ENCODE measurements at regions of chr1 and their contacts with region 1.

Region 1: DNA sequence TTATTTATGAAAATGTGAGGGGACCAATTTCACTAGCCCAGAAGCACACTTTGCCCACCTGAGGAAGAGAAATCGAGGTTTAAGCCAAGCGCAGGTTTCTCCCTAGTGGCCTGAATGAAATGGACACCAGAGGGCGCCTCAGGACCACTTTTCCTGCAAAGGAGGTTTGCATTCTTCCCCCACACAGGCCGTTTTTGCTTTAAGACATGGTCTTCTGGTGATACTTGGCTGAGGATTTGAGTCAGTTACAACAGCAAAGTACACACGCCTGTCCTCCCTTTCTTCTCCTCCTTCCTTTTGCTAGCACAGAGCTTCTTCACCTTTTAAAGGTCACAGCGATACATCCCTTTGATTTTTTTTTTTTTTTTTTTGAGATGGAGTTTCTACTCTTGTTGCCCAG is 5.4 kb downstream of the PLA2G2E start:
- DNase-seq: peak; percentile 40 to 59 (median 47)
- H3K4me3 ChIP-seq: no peak overlapping the region
- H3K4me3 Mint-ChIP-seq: no peak overlapping the region
- H3K27ac ChIP-seq: no peak overlapping the region
- H3K27ac Mint-ChIP-seq: no peak overlapping the region
- H3K4me1 ChIP-seq: no peaks in the 10 kb centered on the region
- H3K4me1 Mint-ChIP-seq: no peaks in the 10 kb centered on the region
- H3K27me3 ChIP-seq: no peaks in the 10 kb centered on the region
- H3K27me3 Mint-ChIP-seq: peaks cover 2% of the 10 kb centered on the region in 3 donors
- CTCF ChIP-seq: peak; percentile 83

Region 2: DNA sequence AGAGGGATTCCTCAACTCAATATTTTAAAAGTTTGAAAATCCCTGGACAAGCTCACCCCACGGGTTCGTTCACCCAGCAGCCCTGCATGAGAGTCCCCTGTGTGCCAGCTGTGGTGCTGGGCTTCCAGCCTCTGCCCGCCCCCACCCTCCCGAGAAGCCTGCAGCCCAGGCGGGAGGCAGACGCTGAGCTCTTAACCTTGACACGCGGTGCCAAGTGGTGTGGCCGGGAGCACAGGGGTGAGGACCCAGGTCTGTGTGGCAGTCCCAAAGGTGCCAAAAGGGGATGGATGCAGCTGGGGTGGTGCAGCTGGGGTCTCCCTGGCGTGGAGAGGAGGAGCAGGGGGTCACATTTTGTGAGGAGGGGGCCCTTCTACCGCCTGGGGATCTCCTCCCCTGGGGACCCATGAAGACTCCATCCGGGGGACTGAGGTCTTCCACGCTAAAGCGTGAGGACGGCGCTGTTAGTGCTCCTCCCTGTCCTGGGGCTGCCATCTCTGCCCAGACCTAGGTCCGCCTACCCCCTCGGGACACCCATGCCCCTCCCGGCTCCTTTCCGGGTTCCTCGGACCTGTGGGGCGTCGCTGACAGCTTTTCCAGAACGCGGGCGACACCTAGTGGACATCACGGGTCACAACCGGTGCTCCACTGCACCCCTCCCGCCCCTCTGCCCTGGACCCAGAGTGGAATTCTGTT is 234.0 kb after region 1 on chr1:
- intact Hi-C with region 1: loop called (anchors 1 to 5 kb)
- DNase-seq: peak; percentile 58 to 70 (median 64)
- H3K4me3 ChIP-seq: peak overlapping the region in 2 of 3 experiments; percentile 11 to 57
- H3K4me3 Mint-ChIP-seq: peak overlapping the region; percentile 63 to 75
- H3K27ac ChIP-seq: no peak overlapping the region
- H3K27ac Mint-ChIP-seq: peak overlapping the region; percentile 75 to 97 (median 95)
- H3K4me1 ChIP-seq: peaks cover 30 to 33% of the 10 kb centered on the region in 2 donors
- H3K4me1 Mint-ChIP-seq: peaks cover 28% of the 10 kb centered on the region
- H3K27me3 ChIP-seq: peaks cover 0 to 5% of the 10 kb centered on the region in 2 donors
- H3K27me3 Mint-ChIP-seq: peaks cover 7 to 17% (median 8%) of the 10 kb centered on the region in 3 donors
- CTCF ChIP-seq: peak; percentile 96

Region 3: DNA sequence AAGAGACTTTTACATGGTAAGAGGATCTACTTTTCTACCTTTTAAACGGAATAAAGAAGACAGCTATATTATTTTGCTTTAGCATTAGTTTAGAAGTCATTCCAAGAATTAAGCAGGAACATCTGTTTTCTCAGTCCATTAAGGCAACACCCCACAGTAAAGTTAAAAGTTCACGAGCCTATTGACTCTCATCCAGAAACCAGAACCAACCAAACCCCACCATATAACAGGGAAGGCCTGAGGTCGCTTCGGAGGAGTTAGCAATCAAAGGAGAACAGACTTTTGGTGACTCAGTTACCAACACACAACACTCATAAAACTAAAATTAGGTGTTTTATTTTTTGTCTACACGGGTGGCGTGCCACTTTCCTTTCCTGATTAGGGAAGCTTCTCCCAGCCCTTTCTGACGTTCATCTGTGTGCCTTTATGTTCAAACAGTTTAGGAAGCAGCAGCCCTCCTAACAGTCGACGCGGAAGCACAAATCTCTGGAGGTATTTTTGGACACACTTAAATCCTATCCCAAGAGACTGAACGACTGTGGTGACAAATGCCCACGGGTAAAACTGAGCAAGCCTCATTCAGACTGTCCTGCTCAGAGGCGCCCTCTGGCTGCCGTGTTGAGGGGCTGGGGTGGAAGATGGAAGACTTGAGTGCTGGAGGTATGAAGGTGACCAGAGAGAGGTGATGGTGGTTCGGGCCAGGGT is 276.9 kb after region 1 on chr1:
- intact Hi-C with region 1: loop called (anchors 2 to 5 kb)
- DNase-seq: peak; percentile 11 to 32 (median 18)
- H3K4me3 ChIP-seq: no peak overlapping the region
- H3K4me3 Mint-ChIP-seq: peak overlapping the region in 1 of 2 donors; percentile 9
- H3K27ac ChIP-seq: no peak overlapping the region
- H3K27ac Mint-ChIP-seq: no peak overlapping the region
- H3K4me1 ChIP-seq: no peaks in the 10 kb centered on the region
- H3K4me1 Mint-ChIP-seq: peaks cover 3% of the 10 kb centered on the region
- H3K27me3 ChIP-seq: peaks cover 3 to 5% of the 10 kb centered on the region in 2 donors
- H3K27me3 Mint-ChIP-seq: peaks cover 21 to 36% (median 33%) of the 10 kb centered on the region in 3 donors
- CTCF ChIP-seq: peak; percentile 76

Region 4: DNA sequence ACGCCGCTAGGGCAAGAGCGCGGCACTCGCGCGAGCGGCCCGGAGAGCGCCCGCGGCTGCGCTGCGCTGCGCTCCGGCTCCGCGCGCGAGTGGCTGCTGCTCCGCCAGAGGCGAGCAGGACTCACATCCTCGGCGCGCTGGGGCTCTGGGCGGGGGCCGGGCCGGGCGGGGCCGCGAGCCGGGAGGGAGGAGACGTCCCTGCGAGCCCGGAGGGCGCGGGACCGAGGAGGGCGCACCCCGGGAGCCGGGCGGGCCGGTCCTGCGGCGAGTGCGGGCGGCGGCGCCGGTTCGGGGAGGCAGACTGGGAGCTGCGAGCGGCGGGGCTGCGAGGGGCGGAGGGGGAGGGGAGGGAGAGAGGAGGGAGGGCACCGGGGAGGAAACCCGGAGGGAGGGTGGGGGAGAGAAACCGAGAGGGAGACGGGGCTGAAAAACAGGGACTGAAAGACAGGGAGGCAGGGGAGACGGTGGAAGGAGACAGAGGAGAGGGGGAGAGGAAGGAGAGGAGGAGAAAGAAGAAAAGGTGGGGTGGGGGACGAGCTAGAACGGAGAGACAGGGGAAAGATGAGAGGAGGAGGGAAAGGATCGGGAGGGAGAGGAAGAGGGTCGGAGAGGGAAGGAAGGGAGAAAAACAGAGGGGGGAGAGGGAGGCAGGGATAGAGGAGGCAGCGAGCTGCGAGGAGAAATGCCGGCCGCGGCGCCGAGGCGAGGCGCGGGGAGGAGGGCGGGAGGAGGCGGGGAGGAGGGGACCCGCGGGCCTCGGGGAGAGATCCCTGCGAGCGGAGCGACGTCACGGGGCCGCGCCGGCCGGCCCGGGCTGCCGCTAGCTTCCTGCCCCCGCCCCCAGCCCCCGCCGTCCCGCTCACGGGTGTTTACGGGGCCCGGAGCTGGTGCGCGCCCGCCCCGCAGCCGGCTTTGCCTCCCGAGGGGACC is 567.7 kb after region 1 on chr1 and contains the start of gene CAMK2N1:
- intact Hi-C with region 1: loop called (anchors 5 to 10 kb)
- DNase-seq: no peak
- H3K4me3 ChIP-seq: no peak within 1 kb of the TSS
- H3K4me3 Mint-ChIP-seq: peak within 1 kb of the TSS; percentile 24 to 83
- H3K27ac ChIP-seq: no peak within 1 kb of the TSS
- H3K27ac Mint-ChIP-seq: no peak within 1 kb of the TSS
- H3K4me1 ChIP-seq: peaks cover 0 to 5% of the 10 kb centered on the region in 2 donors
- H3K4me1 Mint-ChIP-seq: peaks cover 5% of the 10 kb centered on the region
- H3K27me3 ChIP-seq: peaks cover 55 to 91% of the 10 kb centered on the region in 2 donors
- H3K27me3 Mint-ChIP-seq: peaks cover 77 to 94% (median 79%) of the 10 kb centered on the region in 3 donors
- CTCF ChIP-seq: no peak
- polyA plus RNA-seq, gene CAMK2N1: not detected

Measured in CD14-positive monocyte (primary cell).